ENCODE measurements at regions of chr2 and their contacts with region 1.

Region 1: DNA sequence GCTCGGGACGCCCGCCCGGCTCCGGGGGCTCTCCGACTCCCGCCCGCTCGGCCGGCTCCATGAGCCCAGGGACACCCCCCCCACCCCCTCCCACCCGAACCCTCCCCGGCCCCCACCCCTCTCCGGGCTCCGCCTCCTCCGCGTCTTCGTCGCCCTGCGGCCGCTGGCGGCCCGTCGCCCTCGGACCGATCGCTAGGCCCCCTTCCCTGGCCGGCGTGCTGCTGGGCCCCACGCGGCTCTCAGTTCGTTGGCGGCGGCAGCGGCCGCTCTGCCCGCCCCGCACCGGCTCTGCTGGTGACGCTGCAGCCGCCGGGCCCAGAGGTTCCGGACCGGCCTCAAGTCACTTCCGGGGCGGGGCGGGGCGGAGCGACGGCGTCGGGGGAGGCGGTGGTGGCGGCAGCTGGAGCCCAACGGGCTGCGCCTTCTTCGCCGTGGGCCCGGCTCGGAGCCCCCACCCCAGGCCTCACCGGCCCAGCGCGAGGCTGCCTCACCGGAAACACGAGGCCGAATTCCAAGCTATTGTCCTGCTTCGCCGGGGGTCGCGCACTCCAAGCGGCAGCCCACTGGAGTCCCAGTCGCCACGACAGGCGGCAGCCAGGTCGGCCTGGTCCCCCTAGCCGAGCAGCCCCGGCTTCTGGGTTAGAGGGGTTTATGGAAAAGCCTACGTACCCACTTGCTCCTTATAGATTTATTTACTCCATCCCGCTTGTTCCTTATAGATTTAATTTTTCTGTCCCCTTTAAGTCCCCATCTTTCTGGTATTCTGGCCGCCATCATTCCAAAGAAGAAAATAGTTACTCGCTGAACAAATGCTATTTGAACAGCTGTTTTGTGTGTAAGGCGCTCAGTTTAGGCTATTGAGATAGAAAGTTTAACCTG is at the start of gene PSME4:
- DNase-seq: peak; percentile 97
- ATAC-seq: peak; percentile 90
- H3K4me3 Mint-ChIP-seq: peak within 1 kb of the TSS; percentile 94
- H3K27ac Mint-ChIP-seq: peak within 1 kb of the TSS; percentile 94
- H3K4me1 Mint-ChIP-seq: peaks cover 49% of the 10 kb centered on the region
- H3K27me3 Mint-ChIP-seq: no peaks in the 10 kb centered on the region
- CTCF ChIP-seq: no peak
- total RNA-seq, gene PSME4: 73.2 and 74.3 TPM in 2 replicates

Region 2: DNA sequence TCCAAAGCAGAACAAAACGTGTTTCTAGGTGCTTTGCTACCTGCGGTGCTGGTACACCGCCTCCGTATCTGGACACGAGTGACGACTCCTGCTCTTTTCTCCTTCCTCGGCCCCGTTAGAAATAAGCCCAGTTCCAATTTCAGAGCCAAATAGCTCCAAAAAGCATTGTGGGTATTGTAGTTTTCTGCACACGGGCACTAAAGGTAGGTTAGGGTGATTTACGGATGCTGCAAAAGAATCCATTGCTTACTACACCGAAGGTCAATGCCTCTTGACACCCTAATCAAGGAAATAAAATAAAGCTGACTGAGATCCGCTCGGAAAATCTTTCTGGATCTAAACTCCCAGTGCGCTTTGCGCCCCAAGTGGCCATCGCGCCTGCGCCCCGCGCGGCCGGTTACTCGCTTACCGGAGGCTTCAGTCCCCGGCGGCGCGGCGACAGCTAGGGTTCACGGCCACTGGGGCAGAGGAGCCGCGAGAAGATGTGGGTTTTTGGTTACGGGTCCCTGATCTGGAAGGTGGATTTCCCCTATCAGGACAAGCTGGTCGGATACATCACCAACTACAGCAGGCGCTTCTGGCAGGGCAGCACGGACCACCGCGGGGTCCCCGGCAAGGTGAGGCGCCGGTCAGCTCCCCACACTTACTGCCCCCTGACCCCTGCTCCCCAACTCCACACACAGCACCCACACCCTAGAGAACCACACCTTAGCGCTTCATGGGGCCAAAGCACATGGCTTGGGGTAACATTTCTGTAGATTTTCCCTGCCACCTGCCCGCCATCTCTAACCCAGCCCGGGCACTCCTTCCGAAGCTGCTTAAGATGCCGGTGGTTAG is 203.3 kb before region 1 on chr2 and contains the start of gene CHAC2:
- CTCF ChIA-PET with region 1: no interaction called
- POLR2A ChIA-PET with region 1: interaction called, 5 read pairs
- intact Hi-C with region 1: loop called (anchors 1 kb)
- DNase-seq: peak; percentile 82
- ATAC-seq: peak; percentile 92
- H3K4me3 Mint-ChIP-seq: peak within 1 kb of the TSS; percentile 95
- H3K27ac Mint-ChIP-seq: peak within 1 kb of the TSS; percentile 99
- H3K4me1 Mint-ChIP-seq: peaks cover 21% of the 10 kb centered on the region
- H3K27me3 Mint-ChIP-seq: no peaks in the 10 kb centered on the region
- CTCF ChIP-seq: no peak
- total RNA-seq, gene CHAC2: 7.0 and 7.6 TPM in 2 replicates

Region 3: GRCh38 chr2:53903011-53903410 is 68.0 kb before region 1 on chr2:
- CTCF ChIA-PET with region 1: no interaction called
- POLR2A ChIA-PET with region 1: no interaction called
- intact Hi-C with region 1: no loop called
- DNase-seq: no peak
- ATAC-seq: no peak
- H3K4me3 Mint-ChIP-seq: no peak overlapping the region
- H3K27ac Mint-ChIP-seq: no peak overlapping the region
- H3K4me1 Mint-ChIP-seq: no peaks in the 10 kb centered on the region
- H3K27me3 Mint-ChIP-seq: no peaks in the 10 kb centered on the region
- CTCF ChIP-seq: no peak

Region 4: GRCh38 chr2:53949457-53949856 is 21.5 kb before region 1 on chr2:
- CTCF ChIA-PET with region 1: no interaction called
- POLR2A ChIA-PET with region 1: interaction called, 8 read pairs
- intact Hi-C with region 1: loop called (anchors 2 kb)
- DNase-seq: no peak
- ATAC-seq: no peak
- H3K4me3 Mint-ChIP-seq: no peak overlapping the region
- H3K27ac Mint-ChIP-seq: peak overlapping the region; percentile 32
- H3K4me1 Mint-ChIP-seq: peaks cover 67% of the 10 kb centered on the region
- H3K27me3 Mint-ChIP-seq: no peaks in the 10 kb centered on the region
- CTCF ChIP-seq: no peak

Region 5: DNA sequence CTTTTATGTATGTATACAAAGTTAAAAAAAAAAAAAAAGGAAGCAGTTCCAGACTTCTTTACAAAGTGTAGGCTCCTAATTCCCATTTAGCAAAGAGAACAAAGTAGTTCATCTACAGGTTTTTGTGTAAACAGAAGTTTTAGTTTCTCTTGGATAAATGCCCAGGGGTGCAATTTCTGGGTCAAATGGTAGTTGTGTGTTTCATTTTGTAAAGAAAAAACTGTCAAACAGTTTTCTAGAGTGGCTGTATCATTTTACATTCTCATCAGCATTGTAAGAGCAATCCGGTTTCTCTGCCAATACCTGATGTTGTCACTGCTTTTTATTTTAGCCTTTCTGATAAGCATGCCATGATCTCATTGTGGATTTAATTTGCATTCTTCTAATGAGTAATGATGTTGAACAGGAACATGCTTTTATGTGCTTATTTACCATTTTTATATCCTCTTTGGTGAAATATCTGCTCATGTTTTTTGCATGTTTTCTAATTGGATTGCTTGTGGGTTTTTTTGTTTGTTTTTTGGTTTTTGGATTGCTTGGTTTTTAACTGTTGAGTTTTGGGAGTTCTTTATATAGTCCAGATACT is 16.5 kb after region 1 on chr2:
- CTCF ChIA-PET with region 1: no interaction called
- POLR2A ChIA-PET with region 1: interaction called, 10 read pairs
- intact Hi-C with region 1: no loop called
- DNase-seq: no peak
- ATAC-seq: no peak
- H3K4me3 Mint-ChIP-seq: no peak overlapping the region
- H3K27ac Mint-ChIP-seq: peak overlapping the region; percentile 70
- H3K4me1 Mint-ChIP-seq: peaks cover 18% of the 10 kb centered on the region
- H3K27me3 Mint-ChIP-seq: no peaks in the 10 kb centered on the region
- CTCF ChIP-seq: no peak

Region 6: GRCh38 chr2:54099829-54100585 is 129.0 kb after region 1 on chr2:
- CTCF ChIA-PET with region 1: interaction called, 3 read pairs
- POLR2A ChIA-PET with region 1: interaction called, 37 read pairs
- intact Hi-C with region 1: loop called (anchors 2 kb)
- DNase-seq: peak; percentile 45
- ATAC-seq: peak; percentile 75
- H3K4me3 Mint-ChIP-seq: peak overlapping the region; percentile 52
- H3K27ac Mint-ChIP-seq: peak overlapping the region; percentile 91
- H3K4me1 Mint-ChIP-seq: peaks cover 81% of the 10 kb centered on the region
- H3K27me3 Mint-ChIP-seq: no peaks in the 10 kb centered on the region
- CTCF ChIP-seq: no peak

Region 7: GRCh38 chr2:55223958-55224760 is 1253.2 kb after region 1 on chr2:
- CTCF ChIA-PET with region 1: no interaction called
- POLR2A ChIA-PET with region 1: no interaction called
- intact Hi-C with region 1: loop called (anchors 2 kb)
- DNase-seq: no peak
- ATAC-seq: no peak
- H3K4me3 Mint-ChIP-seq: peak overlapping the region; percentile 81
- H3K27ac Mint-ChIP-seq: peak overlapping the region; percentile 87
- H3K4me1 Mint-ChIP-seq: peaks cover 28% of the 10 kb centered on the region
- H3K27me3 Mint-ChIP-seq: no peaks in the 10 kb centered on the region
- CTCF ChIP-seq: no peak

Measured in activated B cell treated with CpG ODN at 0.5 μM for 24 hours (primary cell).